K562 (cell line): ENCODE measurements at regions of chr1 and their contacts with region 1.

Region 1: GRCh38 chr1:110034451-110035235 is at the start of gene STRIP1:
- DNase-seq: peak; percentile 94 to 98 (median 94)
- ATAC-seq: peak; percentile 91
- H3K4me3 ChIP-seq: peak within 1 kb of the TSS; percentile 95
- H3K27ac ChIP-seq: peak within 1 kb of the TSS; percentile 88
- H3K4me1 ChIP-seq: peaks cover 16 to 40% of the 10 kb centered on the region in 2 experiments
- H3K27me3 ChIP-seq: no peaks in the 10 kb centered on the region
- CTCF ChIP-seq: peak in 1 of 3 experiments; percentile 60; a peak in 2 of 6 replicates
- EP300 ChIP-seq: no peak; the same call in none of the 2 replicates
- POLR2A ChIP-seq: peak; percentile 90
- RAD21 ChIP-seq: no peak
- polyA plus RNA-seq, gene STRIP1: 9.9 to 10.5 TPM

Region 2: GRCh38 chr1:109933856-109934711 is 100.6 kb before region 1 on chr1:
- CTCF ChIA-PET with region 1: no interaction called
- POLR2A ChIA-PET with region 1: no interaction called
- in situ Hi-C with region 1: no loop called
- intact Hi-C with region 1: no loop called
- DNase-seq: peak in 2 of 4 experiments; percentile 37 to 49
- ATAC-seq: peak; percentile 13; the same call in 2 of the 3 replicates
- H3K4me3 ChIP-seq: no peak overlapping the region
- H3K27ac ChIP-seq: no peak overlapping the region
- H3K4me1 ChIP-seq: peaks cover 15 to 22% of the 10 kb centered on the region in 2 experiments; a peak in 4 of 5 replicates
- H3K27me3 ChIP-seq: no peaks in the 10 kb centered on the region
- CTCF ChIP-seq: 0 out of 6 replicates have a peak, but pooled peaks of 1 of the 3 experiments have one; percentile 4
- EP300 ChIP-seq: no peak
- POLR2A ChIP-seq: no peak
- RAD21 ChIP-seq: 0 out of 4 replicates have a peak, but pooled peaks of 1 of the 2 experiments have one; percentile 15

Region 3: GRCh38 chr1:110019770-110020169 is 14.9 kb before region 1 on chr1:
- CTCF ChIA-PET with region 1: interaction called, 5 read pairs
- POLR2A ChIA-PET with region 1: interaction called, 14 read pairs
- in situ Hi-C with region 1: no loop called
- intact Hi-C with region 1: no loop called
- DNase-seq: no peak
- ATAC-seq: no peak
- H3K4me3 ChIP-seq: no peak overlapping the region
- H3K27ac ChIP-seq: no peak overlapping the region
- H3K4me1 ChIP-seq: no peaks in the 10 kb centered on the region
- H3K27me3 ChIP-seq: no peaks in the 10 kb centered on the region
- CTCF ChIP-seq: no peak
- EP300 ChIP-seq: no peak
- POLR2A ChIP-seq: no peak
- RAD21 ChIP-seq: no peak

Region 4: DNA sequence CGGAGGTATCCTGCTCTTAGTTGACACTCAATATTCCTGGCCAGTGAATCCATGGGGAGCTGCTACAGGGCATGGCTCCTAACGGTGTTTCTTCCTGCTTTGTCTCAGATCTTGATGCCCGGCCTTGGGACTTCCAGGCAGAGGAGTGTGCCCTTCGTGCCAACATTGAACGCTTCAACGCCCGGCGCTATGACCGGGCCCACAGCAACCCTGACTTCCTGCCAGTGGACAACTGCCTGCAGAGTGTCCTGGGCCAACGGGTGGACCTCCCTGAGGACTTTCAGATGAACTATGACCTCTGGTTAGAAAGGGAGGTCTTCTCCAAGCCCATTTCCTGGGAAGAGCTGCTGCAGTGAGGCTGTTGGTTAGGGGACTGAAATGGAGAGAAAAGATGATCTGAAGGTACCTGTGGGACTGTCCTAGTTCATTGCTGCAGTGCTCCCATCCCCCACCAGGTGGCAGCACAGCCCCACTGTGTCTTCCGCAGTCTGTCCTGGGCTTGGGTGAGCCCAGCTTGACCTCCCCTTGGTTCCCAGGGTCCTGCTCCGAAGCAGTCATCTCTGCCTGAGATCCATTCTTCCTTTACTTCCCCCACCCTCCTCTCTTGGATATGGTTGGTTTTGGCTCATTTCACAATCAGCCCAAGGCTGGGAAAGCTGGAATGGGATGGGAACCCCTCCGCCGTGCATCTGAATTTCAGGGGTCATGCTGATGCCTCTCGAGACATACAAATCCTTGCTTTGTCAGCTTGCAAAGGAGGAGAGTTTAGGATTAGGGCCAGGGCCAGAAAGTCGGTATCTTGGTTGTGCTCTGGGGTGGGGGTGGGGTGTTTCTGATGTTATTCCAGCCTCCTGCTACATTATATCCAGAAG is 19.1 kb after region 1 on chr1:
- CTCF ChIA-PET with region 1: no interaction called
- POLR2A ChIA-PET with region 1: interaction called, 200 read pairs
- in situ Hi-C with region 1: no loop called
- intact Hi-C with region 1: no loop called
- DNase-seq: peak; percentile 79 to 87 (median 84)
- ATAC-seq: peak; percentile 87
- H3K4me3 ChIP-seq: no peak overlapping the region
- H3K27ac ChIP-seq: no peak overlapping the region
- H3K4me1 ChIP-seq: peaks cover 13 to 16% of the 10 kb centered on the region in 2 experiments
- H3K27me3 ChIP-seq: no peaks in the 10 kb centered on the region
- CTCF ChIP-seq: peak; percentile 93 to 99 (median 97)
- EP300 ChIP-seq: no peak
- POLR2A ChIP-seq: no peak
- RAD21 ChIP-seq: peak; percentile 87 to 92